ENCODE measurements at regions of chr17 and their contacts with region 1.

Region 1: GRCh38 chr17:28416703-28417311 is 10.8 kb upstream of the SLC46A1 start:
- DNase-seq: peak; percentile 56
- H3K4me3 ChIP-seq: no peak overlapping the region
- H3K27ac ChIP-seq: no peak overlapping the region
- H3K4me1 ChIP-seq: peaks cover 4% of the 10 kb centered on the region
- H3K27me3 ChIP-seq: no peaks in the 10 kb centered on the region
- CTCF ChIP-seq: peak; percentile 86 to 91

Region 2: DNA sequence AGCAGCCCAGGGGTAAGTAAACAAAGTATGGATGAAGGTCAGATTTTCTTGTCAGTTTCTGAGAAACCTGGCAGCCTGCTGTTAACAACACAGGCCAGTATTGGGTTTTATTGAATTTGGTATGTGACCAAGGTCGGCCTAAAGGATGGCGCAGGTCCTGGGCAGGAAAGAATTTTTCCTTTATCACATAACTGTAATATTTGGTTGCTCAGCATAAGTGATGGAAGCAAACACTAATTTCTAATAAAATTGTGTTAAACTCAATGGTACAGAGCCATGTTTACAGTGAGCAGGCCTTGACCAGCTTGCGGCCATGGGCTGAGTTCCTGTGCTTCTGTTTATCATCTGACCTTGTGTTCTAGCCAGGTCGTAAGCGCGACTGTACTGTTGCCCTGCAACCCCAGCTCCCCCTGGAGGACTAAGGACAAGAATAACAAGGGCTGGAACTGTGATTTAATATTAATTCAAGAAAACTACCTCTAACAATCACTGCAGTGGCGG is 70.0 kb before region 1 on chr17:
- CTCF ChIA-PET with region 1: interaction called, 3 read pairs
- dilution Hi-C with region 1: no loop called
- in situ Hi-C with region 1: no loop called
- intact Hi-C with region 1: loop called (anchors 2 kb)
- DNase-seq: no peak
- H3K4me3 ChIP-seq: no peak overlapping the region
- H3K27ac ChIP-seq: peak overlapping the region; percentile 47
- H3K4me1 ChIP-seq: peaks cover 33% of the 10 kb centered on the region
- H3K27me3 ChIP-seq: no peaks in the 10 kb centered on the region
- CTCF ChIP-seq: peak in 1 of 2 donors; percentile 33

Region 3: DNA sequence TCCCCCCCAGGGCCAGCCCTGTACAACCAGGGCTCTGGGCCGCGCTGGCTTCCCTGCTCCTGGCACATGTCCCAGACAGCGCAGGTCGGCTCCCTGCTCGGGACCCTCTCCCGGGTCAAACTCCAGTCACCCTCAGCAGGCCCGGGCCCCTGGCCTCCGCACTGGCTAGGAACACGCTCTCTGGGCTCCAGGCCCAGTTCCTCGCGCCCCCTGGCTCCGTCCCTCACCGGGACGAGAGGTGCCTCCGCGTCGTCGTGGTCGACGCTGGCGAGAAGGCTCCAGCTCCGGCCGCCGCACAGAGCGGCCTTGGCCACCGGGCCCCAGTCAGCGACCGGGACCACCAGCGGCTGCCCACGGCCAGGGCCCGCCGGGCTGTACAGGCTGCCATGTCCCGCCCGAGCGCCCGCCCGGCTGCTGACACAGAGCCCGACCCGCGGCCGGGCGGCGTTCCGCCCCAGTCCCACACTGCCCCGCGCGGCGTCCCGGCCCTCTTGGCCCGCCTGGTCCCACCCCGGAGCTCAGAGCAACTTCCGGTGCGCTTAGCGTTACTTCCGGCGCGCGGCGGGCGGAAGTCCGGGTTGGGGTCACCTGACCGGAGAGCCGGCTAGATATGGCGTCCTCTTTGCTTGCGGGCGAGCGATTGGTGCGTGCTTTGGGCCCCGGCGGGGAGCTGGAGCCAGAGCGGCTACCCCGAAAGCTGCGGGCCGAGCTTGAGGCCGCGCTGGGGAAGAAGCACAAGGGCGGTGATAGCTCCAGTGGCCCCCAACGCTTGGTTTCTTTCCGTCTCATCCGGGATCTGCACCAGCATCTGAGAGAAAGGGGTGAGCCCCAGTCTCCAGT is 59.5 kb before region 1 on chr17 and contains the start of gene POLDIP2:
- CTCF ChIA-PET with region 1: no interaction called
- dilution Hi-C with region 1: no loop called
- in situ Hi-C with region 1: no loop called
- intact Hi-C with region 1: loop called (anchors 2 kb)
- DNase-seq: peak; percentile 94
- H3K4me3 ChIP-seq: peak within 1 kb of the TSS; percentile 88 to 99 (median 99)
- H3K27ac ChIP-seq: peak within 1 kb of the TSS; percentile 85
- H3K4me1 ChIP-seq: peaks cover 16% of the 10 kb centered on the region
- H3K27me3 ChIP-seq: no peaks in the 10 kb centered on the region
- CTCF ChIP-seq: no peak
- total RNA-seq, gene POLDIP2: 76.3 to 80.5 TPM

Region 4: GRCh38 chr17:28371245-28372202 is 45.3 kb before region 1 on chr17 and contains the start of gene SARM1:
- CTCF ChIA-PET with region 1: no interaction called
- dilution Hi-C with region 1: no loop called
- in situ Hi-C with region 1: no loop called
- intact Hi-C with region 1: loop called (anchors 2 kb)
- DNase-seq: peak; percentile 27
- H3K4me3 ChIP-seq: peak within 1 kb of the TSS; percentile 23 to 50 (median 36)
- H3K27ac ChIP-seq: no peak within 1 kb of the TSS
- H3K4me1 ChIP-seq: peaks cover 11% of the 10 kb centered on the region
- H3K27me3 ChIP-seq: no peaks in the 10 kb centered on the region
- CTCF ChIP-seq: no peak
- total RNA-seq, gene SARM1: 4.8 to 8.7 TPM

Region 5: GRCh38 chr17:28398280-28398981 is 18.4 kb before region 1 on chr17:
- CTCF ChIA-PET with region 1: no interaction called
- dilution Hi-C with region 1: no loop called
- in situ Hi-C with region 1: no loop called
- intact Hi-C with region 1: no loop called
- DNase-seq: no peak
- H3K4me3 ChIP-seq: no peak overlapping the region
- H3K27ac ChIP-seq: no peak overlapping the region
- H3K4me1 ChIP-seq: peaks cover 22% of the 10 kb centered on the region
- H3K27me3 ChIP-seq: no peaks in the 10 kb centered on the region
- CTCF ChIP-seq: no peak

Region 6: GRCh38 chr17:28467456-28468025 is 50.7 kb after region 1 on chr17:
- CTCF ChIA-PET with region 1: no interaction called
- dilution Hi-C with region 1: no loop called
- in situ Hi-C with region 1: no loop called
- intact Hi-C with region 1: loop called (anchors 5 kb)
- DNase-seq: peak; percentile 86
- H3K4me3 ChIP-seq: no peak overlapping the region
- H3K27ac ChIP-seq: no peak overlapping the region
- H3K4me1 ChIP-seq: peaks cover 46% of the 10 kb centered on the region
- H3K27me3 ChIP-seq: no peaks in the 10 kb centered on the region
- CTCF ChIP-seq: no peak

Region 7: DNA sequence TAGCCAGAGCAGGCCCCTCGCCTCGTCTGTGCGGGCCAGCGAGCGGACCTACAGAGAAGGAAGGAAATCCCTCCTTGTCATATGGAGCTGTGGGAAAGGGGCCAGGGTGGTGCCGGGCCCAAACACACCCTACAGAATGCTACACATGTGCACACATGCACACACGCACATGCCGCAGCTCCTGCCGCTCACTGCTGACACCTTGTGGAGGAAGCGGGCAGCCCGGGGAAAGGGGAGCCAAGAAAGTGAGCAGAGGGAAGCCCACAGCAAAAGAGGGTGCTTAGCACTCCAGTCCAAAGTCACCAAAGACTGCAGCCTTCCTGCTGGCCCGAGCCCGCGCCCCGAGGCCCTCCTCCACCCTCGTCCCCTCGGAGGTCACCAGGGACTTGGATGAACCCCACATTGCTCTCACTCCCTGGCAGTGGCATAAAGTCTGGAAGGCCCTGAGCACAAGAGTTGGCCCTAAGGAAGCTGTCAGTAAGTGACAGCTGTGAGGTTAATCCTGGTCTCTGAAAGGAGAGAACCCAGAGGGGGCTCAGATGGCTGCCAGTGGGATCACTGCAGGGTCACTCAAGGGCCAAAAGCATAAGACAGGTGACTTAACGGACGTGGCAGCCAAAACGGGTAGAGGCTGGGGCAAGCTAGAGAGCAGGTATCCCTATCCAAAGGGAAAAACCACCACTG is 695.2 kb after region 1 on chr17:
- CTCF ChIA-PET with region 1: no interaction called
- dilution Hi-C with region 1: no loop called
- in situ Hi-C with region 1: no loop called
- intact Hi-C with region 1: no loop called
- DNase-seq: peak; percentile 55
- H3K4me3 ChIP-seq: no peak overlapping the region
- H3K27ac ChIP-seq: no peak overlapping the region
- H3K4me1 ChIP-seq: peaks cover 10% of the 10 kb centered on the region
- H3K27me3 ChIP-seq: no peaks in the 10 kb centered on the region
- CTCF ChIP-seq: peak; percentile 96 to 98

Region 8: GRCh38 chr17:29252101-29252866 is 835.5 kb after region 1 on chr17:
- CTCF ChIA-PET with region 1: no interaction called
- dilution Hi-C with region 1: no loop called
- in situ Hi-C with region 1: no loop called
- intact Hi-C with region 1: no loop called
- DNase-seq: no peak
- H3K4me3 ChIP-seq: no peak overlapping the region
- H3K27ac ChIP-seq: no peak overlapping the region
- H3K4me1 ChIP-seq: peaks cover 7% of the 10 kb centered on the region
- H3K27me3 ChIP-seq: no peaks in the 10 kb centered on the region
- CTCF ChIP-seq: peak; percentile 37 to 47